Dendritic cell treated with granulocyte-macrophage colony-stimulating factor and Interleukin-4, amounts not matched to agents 40 ng/mL and 50 ng/mL, for 4 days (primary cell): ENCODE measurements at regions of chr5 and their contacts with region 1.

Region 1: GRCh38 chr5:175657593-175658271 is at the start of gene HRH2:
- H3K4me3 Mint-ChIP-seq: peak within 1 kb of the TSS; percentile 99
- H3K27ac Mint-ChIP-seq: peak within 1 kb of the TSS; percentile 87
- H3K4me1 Mint-ChIP-seq: peaks cover 85% of the 10 kb centered on the region
- H3K27me3 Mint-ChIP-seq: no peaks in the 10 kb centered on the region

Region 2: DNA sequence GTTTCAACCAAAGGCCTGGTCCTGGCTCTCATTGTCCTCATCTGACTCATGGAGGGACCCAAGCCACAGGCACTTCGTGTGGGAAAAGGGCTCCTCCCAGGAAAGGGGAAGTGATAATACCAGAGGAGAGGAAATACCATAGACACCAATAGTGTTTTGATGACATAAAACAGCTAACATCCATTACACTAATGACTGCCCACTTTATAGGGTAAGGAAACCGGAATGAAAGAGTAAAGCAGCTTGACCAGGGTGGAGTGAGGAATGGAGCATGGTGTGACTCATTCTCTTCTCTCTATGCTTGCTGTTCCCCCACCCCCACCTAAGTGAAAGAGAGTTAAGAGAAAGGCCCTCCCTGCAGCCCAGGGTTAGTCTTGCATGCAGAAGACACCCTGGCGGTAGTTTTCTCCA is 67.3 kb before region 1 on chr5:
- intact Hi-C with region 1: loop called (anchors 10 kb)
- H3K4me3 Mint-ChIP-seq: no peak overlapping the region
- H3K27ac Mint-ChIP-seq: peak overlapping the region; percentile 85
- H3K4me1 Mint-ChIP-seq: peaks cover 39% of the 10 kb centered on the region
- H3K27me3 Mint-ChIP-seq: peaks cover 15% of the 10 kb centered on the region